ENCODE measurements at regions of chr10 and their contacts with region 1.

Region 1: DNA sequence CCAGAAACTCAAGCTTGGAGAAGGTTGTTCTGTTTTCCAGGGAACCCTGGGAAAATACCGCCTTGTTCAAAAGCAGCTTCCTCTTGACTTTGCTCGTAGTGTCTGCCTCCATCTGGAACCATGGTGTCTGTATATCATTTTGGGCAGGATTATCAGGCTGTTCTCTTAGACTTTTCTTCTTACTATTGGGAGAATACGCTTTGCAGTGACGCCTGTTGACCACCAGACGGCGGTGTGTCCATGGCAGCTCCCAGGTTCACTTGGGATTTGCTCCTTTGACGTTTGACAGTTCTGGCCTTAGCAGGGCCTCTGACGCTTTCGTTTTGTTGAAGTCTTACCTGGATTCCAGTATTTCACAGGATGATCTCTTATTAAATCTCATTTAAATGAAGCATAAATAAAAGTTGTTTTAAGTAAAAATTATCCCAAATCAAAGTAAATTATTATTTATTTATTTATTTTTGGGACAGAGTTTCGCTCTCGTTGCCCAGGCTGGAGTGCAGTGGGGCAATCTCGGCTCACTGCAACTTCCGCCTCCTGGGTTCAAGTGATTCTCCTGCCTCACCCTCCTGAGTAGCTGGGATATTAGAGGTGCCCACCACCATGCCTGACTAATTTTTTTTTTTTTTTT is 41.8 kb upstream of the GJD4 start:
- DNase-seq: peak; percentile 50 to 55
- ATAC-seq: peak in 4 of 8 donors; percentile 13 to 56 (median 26)
- H3K4me3 ChIP-seq: no peak overlapping the region
- H3K27ac ChIP-seq: peak overlapping the region in 5 of 10 donors; percentile 63 to 79 (median 67)
- H3K4me1 ChIP-seq: peaks cover 17 to 60% (median 54%) of the 10 kb centered on the region in 9 donors
- H3K27me3 ChIP-seq: no peaks in the 10 kb centered on the region
- CTCF ChIP-seq: peak; percentile 89 to 100 (median 93)

Region 2: DNA sequence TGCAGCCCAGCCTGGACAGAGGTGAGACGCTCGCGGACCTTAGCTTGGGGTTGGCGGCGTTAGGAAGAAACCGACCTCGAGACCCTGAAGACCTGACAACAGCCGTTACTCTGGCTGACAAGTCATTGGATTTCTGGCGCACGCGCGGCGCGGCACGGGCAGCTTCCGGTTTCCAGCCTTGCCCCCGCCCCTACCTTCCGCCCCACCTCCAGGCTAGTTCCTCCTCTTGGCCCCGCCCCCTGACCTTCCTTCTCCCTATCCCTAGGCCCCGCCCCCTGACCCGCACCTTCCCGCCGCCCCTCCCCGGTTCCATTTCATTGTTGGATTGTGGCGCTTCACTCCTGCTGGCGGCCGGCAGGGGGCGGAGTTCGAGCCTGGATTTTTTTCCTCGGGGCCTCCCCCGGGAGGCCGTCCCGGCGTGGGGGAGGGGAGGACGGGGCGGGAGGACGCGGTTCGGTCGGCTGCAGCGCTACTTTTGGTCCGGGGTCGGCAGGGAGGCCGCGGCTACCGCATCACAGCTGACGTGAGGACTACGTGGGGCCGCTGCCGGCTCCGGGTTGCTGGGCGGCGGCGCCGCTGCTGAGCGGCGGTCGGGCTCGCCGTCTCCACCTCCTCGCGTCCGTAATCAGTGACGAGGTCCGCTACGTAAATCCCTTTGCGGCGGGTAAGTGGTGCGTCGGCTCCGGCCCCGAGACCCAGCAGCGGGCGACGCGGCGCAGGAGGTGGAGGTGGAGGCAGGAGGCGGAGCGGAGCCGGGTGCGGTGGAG is 436.7 kb before region 1 on chr10 and contains the start of gene CREM:
- intact Hi-C with region 1: loop called in 1 of 10 experiments (anchors 10 kb)
- DNase-seq: peak; percentile 99 to 100
- ATAC-seq: peak; percentile 94 to 99 (median 97)
- H3K4me3 ChIP-seq: peak within 1 kb of the TSS; percentile 57 to 92 (median 82)
- H3K27ac ChIP-seq: peak within 1 kb of the TSS; percentile 97 to 100 (median 100)
- H3K4me1 ChIP-seq: peaks cover 3 to 38% (median 21%) of the 10 kb centered on the region in 9 donors
- H3K27me3 ChIP-seq: no peaks in the 10 kb centered on the region
- CTCF ChIP-seq: peak; percentile 84 to 96 (median 88)
- total RNA-seq, gene CREM: 44.1 to 91.7 (median 57.6) TPM

Region 3: DNA sequence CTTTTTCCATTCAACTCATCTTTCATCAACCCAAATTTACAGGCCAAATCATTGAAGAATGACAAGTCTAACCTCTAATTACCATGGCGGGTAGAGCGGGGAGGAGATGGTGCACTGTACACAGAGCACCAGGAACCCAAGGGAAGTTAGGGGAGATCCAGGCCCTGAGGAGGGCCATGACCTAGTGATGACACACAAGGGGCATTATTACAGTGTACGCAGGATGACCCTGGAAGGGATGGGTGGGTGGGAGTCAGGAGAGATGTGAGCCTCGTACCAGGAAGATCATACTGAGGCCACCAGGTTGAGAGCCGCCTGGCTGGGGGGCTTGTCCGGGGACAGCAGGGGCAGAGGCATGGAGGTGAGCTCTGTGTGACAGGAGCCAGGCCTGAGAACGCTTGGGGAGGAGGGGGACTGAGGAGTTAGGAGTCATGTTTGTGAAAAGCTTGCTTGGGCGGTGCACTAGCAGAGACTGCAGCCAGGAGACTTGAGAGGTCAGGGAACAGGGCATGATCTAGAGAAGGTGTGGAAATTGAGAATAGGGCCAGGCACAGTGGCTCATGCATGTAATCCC is 316.5 kb before region 1 on chr10:
- intact Hi-C with region 1: loop called in 2 of 10 experiments (anchors 5 to 10 kb)
- DNase-seq: no peak
- ATAC-seq: no peak
- H3K4me3 ChIP-seq: no peak overlapping the region
- H3K27ac ChIP-seq: no peak overlapping the region
- H3K4me1 ChIP-seq: no peaks in the 10 kb centered on the region
- H3K27me3 ChIP-seq: no peaks in the 10 kb centered on the region
- CTCF ChIP-seq: no peak

Region 4: DNA sequence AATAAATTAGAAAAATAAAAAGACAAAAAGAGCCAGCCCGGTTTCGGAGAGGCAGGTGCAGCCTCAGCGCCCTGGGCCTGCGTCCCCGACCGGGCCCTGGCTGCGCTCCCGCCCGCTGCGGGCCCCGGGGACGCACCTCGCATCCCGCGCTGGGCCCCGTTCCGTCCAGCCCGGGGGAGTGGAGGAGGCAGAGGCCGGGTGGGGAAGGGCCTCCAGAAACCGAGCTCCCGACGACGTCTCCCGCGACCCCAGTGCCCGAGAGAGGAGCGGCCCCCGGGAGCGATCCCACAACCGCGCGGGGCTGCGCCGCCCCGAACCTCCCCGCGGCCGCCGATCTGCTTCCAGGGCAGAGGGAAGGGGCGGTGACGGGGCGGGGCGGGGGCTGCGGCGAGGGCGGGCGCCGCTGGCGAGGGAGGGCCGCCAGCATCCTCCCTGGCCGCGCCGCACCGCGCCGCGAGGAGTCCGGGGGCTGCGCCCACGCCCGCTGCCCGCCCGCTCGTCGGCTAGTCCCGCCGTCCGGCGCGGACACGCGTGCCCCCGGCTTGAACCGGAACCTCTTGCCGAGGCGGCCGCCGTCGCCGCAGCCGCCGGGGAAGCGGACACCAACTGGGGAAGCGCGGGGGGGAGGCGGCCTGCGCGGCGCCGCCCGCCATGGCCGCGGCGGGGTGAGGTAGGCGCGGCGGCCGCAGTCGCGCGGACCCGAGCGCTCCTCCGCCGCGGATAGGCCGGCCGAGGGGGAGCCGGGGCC is 227.1 kb before region 1 on chr10 and contains the start of gene CCNY:
- intact Hi-C with region 1: loop called in 7 of 10 experiments (anchors 2 to 10 kb)
- DNase-seq: peak; percentile 84 to 86
- ATAC-seq: peak; percentile 86 to 94 (median 90)
- H3K4me3 ChIP-seq: peak within 1 kb of the TSS; percentile 91 to 99 (median 96)
- H3K27ac ChIP-seq: peak within 1 kb of the TSS; percentile 85 to 96 (median 92)
- H3K4me1 ChIP-seq: peaks cover 14 to 84% (median 78%) of the 10 kb centered on the region in 9 donors
- H3K27me3 ChIP-seq: no peaks in the 10 kb centered on the region
- CTCF ChIP-seq: no peak
- total RNA-seq, gene CCNY: 69.9 to 99.4 (median 90.1) TPM

Region 5: GRCh38 chr10:35347121-35347562 is 216.2 kb before region 1 on chr10:
- intact Hi-C with region 1: no loop called
- DNase-seq: no peak
- ATAC-seq: peak; percentile 43 to 84 (median 74)
- H3K4me3 ChIP-seq: no peak overlapping the region
- H3K27ac ChIP-seq: peak overlapping the region in 7 of 10 donors; percentile 23 to 61 (median 51)
- H3K4me1 ChIP-seq: peaks cover 25 to 94% (median 83%) of the 10 kb centered on the region in 9 donors
- H3K27me3 ChIP-seq: no peaks in the 10 kb centered on the region
- CTCF ChIP-seq: no peak

Region 6: DNA sequence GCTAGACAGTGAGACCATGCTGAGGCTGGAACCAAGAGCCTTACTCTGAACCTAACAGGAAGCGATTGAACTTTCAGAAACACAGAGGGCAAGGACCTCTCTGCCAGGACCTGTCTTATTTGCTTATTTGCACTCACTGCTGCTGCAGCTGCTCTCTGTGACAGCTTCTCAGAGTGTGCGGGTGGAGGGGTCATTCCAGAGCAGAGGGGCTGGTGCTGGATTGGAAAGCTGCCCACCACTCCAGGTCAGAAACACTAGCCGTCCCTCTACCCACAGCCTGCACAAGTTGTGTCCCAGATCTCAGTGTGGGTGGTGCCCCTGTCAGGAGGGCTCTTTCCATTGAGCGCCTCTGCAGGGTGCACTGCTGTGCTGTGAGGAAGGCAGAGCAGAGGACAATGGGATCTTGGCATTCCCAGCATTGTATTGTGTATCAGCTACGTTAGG is 100.9 kb before region 1 on chr10:
- intact Hi-C with region 1: loop called in 2 of 10 experiments (anchors 5 to 10 kb)
- DNase-seq: no peak
- ATAC-seq: peak; percentile 25 to 78 (median 62)
- H3K4me3 ChIP-seq: no peak overlapping the region
- H3K27ac ChIP-seq: peak overlapping the region in 5 of 10 donors; percentile 44 to 68 (median 61)
- H3K4me1 ChIP-seq: peaks cover 39 to 100% (median 96%) of the 10 kb centered on the region in 9 donors
- H3K27me3 ChIP-seq: no peaks in the 10 kb centered on the region
- CTCF ChIP-seq: no peak